GM10248 (cell line): ENCODE measurements at regions of chr5 and their contacts with region 1.

Region 1: GRCh38 chr5:157743163-157744050 is at the start of gene LSM11:
- DNase-seq: peak; percentile 94
- CTCF ChIP-seq: peak; percentile 100

Region 2: DNA sequence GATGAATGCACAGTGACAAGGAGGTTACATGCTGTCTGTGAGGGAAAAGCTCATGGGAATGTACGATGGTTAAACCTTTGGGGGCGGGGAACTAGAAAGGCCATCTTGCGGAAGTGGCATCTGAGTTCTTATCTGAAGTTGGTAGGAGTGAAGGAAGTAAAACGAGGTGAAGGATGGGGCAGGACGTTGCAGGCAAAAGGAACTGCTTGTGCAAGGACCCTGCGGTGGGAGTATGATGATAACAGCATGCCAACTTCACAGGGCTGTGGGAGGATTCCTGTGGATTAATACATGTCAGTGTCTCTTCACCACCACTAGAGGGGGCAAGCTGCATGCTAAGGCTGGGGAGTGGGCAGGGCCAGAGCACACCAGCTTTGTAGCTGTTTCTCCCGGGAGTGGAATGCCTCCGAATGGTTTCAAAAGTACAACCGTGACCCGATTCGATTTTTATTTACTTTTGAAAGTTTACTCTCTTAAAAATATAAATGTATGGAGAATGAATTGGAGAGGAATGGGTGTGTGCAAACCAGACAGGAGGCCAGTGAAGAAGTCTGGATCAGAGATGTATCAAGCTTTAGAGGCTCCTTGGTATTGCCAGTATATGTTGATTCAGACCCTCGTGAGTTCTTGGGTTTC is 415.0 kb before region 1 on chr5:
- CTCF ChIA-PET with region 1: interaction called, 55 read pairs
- POLR2A ChIA-PET with region 1: no interaction called
- DNase-seq: peak; percentile 80
- CTCF ChIP-seq: peak; percentile 93

Region 3: DNA sequence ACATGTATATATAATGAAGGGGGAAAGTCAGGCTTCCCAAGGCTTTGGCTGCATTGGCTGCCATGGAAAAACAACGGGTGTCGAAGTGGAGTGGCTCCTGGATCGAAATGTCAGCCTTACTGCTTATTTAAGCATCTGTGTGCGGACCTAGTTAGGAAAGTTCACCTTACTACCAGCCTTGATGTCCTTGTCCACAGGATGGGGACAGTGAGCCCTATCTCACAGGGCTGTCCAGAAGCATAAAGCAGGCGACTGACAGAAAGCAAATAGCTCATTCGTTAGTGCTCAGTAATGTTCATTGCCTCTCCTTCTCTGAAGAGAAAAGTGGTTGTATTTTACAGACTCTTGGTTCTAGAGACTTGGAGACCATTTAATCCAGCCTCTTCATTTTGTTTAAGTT is 364.9 kb before region 1 on chr5:
- CTCF ChIA-PET with region 1: interaction called, 12 read pairs
- POLR2A ChIA-PET with region 1: no interaction called
- DNase-seq: no peak
- CTCF ChIP-seq: no peak

Region 4: DNA sequence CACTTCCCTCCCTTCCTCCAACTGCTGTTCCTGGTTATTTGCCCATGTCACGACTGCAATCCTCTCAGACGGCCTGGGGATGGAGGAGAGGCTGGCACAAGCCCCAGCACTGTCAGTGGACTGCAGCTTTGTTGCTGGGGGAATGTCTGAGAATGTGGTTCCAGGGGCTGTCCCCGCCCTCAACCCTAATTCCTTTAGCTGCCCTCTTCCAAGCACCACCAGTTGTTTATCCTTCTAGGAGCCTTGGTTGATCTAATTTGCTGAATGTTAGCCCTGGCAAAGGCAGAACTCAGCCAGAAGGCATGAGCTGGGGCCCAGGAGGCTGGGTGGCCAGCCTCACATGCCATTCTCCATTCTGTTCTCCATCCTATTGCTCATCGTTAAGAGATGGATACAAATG is 219.4 kb before region 1 on chr5:
- CTCF ChIA-PET with region 1: interaction called, 11 read pairs
- POLR2A ChIA-PET with region 1: no interaction called
- DNase-seq: no peak
- CTCF ChIP-seq: no peak

Region 5: DNA sequence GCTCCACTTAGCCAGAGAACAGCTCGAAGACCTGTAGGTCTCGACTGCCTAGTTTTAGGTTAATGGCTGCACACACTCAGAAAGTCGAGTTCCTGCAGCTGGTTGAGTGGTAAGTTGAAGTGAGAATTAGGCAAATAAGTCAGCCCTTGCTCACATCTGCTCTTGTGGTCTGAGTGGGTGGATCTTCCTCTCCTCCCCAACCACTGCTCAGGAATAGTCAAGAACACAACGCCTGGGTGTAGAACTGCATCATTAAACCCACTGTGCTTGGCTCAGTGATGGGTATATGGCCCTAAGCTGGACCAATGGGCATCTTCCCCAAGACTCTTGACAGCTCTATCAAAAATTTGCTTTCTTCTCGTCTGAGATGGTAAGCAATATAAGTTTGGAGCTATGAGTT is 146.9 kb before region 1 on chr5:
- CTCF ChIA-PET with region 1: interaction called, 16 read pairs
- POLR2A ChIA-PET with region 1: no interaction called
- DNase-seq: no peak
- CTCF ChIP-seq: no peak

Region 6: DNA sequence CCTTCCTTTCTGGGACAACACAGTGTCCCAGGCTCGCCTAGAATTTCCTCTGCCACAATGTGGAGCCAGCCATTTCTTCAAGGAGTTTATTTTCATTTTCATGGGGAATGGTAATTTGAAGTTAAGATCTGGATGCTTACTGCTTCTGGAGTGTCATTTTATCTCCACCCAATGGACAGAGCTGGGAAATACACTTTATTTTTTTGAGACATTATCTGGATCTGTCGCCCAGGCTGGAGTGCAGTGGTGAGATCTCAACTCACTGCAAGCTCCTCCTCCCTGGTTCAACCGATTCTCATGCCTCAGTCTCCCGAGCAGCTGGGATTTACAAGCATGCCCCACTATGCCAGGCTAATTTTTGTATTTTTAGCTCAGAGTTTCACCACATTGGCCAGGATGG is 24.9 kb before region 1 on chr5:
- CTCF ChIA-PET with region 1: interaction called, 37 read pairs
- POLR2A ChIA-PET with region 1: no interaction called
- DNase-seq: peak; percentile 52
- CTCF ChIP-seq: peak; percentile 59

Region 7: GRCh38 chr5:157761690-157762621 is 18.5 kb after region 1 on chr5:
- CTCF ChIA-PET with region 1: interaction called, 42 read pairs
- POLR2A ChIA-PET with region 1: no interaction called
- DNase-seq: peak; percentile 66
- CTCF ChIP-seq: peak; percentile 75

Region 8: DNA sequence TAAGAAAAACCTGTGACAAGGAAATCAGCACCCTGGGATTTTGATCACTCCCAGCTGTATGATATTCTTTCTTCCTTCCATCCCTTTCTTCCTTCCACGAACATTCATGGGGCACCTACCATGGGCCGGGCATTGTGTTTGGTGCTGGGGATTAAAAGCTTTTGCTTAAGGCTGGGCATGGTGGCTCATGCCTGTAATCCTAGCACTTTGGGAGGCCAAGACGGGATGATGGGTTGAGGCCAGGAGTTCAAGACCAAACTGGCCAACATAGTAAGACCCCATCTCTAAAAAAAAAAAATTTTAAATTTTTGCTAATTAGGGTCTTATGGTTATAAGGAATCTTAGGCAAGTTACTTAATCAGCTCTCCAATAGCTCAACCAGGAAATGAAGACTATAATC is 164.1 kb after region 1 on chr5:
- CTCF ChIA-PET with region 1: no interaction called
- POLR2A ChIA-PET with region 1: no interaction called
- DNase-seq: no peak
- CTCF ChIP-seq: no peak